B cell (primary cell): ENCODE measurements at regions of chr1 and their contacts with region 1.

Region 1: DNA sequence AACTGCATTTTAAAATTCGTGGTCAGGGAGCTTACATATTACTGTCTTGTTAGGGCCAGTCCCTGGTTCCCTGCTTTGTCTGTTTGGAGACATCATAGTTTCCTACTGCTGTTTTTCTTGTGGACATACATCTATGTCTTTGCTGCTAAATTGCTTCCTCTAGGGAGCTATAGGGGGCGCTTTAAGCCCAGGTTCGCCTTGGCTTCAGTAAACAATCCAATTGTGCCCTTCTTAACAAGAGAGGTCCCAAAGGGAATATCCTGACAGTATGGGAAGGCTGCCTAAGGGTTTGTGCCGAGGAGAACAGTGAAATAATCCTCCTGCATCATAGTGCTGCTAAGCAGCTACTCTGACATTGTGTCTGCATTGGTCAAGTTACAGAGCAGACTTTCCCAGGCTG is 112.5 kb downstream of the USH2A start:
- DNase-seq: peak; percentile 12
- ATAC-seq: no peak
- H3K4me3 ChIP-seq: no peak overlapping the region
- H3K4me3 Mint-ChIP-seq: no peak overlapping the region
- H3K27ac ChIP-seq: no peak overlapping the region
- H3K27ac Mint-ChIP-seq: no peak overlapping the region
- H3K4me1 ChIP-seq: no peaks in the 10 kb centered on the region
- H3K4me1 Mint-ChIP-seq: no peaks in the 10 kb centered on the region
- H3K27me3 ChIP-seq: no peaks in the 10 kb centered on the region
- H3K27me3 Mint-ChIP-seq: no peaks in the 10 kb centered on the region
- CTCF ChIP-seq: peak; percentile 31

Region 2: GRCh38 chr1:216346526-216346925 is 35.8 kb after region 1 on chr1:
- CTCF ChIA-PET with region 1: no interaction called
- POLR2A ChIA-PET with region 1: no interaction called
- intact Hi-C with region 1: no loop called
- DNase-seq: no peak
- ATAC-seq: no peak
- H3K4me3 ChIP-seq: no peak overlapping the region
- H3K4me3 Mint-ChIP-seq: no peak overlapping the region
- H3K27ac ChIP-seq: no peak overlapping the region
- H3K27ac Mint-ChIP-seq: no peak overlapping the region
- H3K4me1 ChIP-seq: no peaks in the 10 kb centered on the region
- H3K4me1 Mint-ChIP-seq: no peaks in the 10 kb centered on the region
- H3K27me3 ChIP-seq: no peaks in the 10 kb centered on the region
- H3K27me3 Mint-ChIP-seq: no peaks in the 10 kb centered on the region
- CTCF ChIP-seq: no peak

Region 3: DNA sequence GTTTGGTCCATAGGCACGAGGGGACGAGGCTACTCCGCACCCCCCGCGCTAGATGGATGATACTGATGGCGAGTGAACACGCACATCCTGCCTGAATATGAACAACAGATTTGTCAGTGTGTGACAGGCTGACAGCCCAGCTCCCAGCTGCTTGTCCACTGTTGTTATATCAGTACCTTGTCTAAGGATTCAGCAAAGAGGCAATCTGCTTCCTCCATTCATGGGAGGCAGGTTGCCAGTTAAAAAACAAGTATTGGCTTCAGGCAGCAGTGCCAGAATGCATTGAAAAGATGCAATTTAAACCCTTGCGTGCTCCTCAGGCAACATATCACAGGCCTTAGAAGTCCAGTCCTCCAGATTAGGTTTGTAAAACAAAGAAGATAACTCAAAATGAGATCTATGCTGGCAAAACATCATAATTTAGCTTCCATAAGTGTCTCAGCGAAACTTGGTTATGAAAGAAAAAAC is 1096.8 kb after region 1 on chr1:
- CTCF ChIA-PET with region 1: no interaction called
- POLR2A ChIA-PET with region 1: interaction called, 10 read pairs
- intact Hi-C with region 1: no loop called
- DNase-seq: no peak
- ATAC-seq: no peak
- H3K4me3 ChIP-seq: no peak overlapping the region
- H3K4me3 Mint-ChIP-seq: no peak overlapping the region
- H3K27ac ChIP-seq: no peak overlapping the region
- H3K27ac Mint-ChIP-seq: no peak overlapping the region
- H3K4me1 ChIP-seq: no peaks in the 10 kb centered on the region
- H3K4me1 Mint-ChIP-seq: no peaks in the 10 kb centered on the region
- H3K27me3 ChIP-seq: no peaks in the 10 kb centered on the region
- H3K27me3 Mint-ChIP-seq: no peaks in the 10 kb centered on the region
- CTCF ChIP-seq: no peak